GM12878 (cell line): ENCODE measurements at regions of chr2 and their contacts with region 1.

Region 1: DNA sequence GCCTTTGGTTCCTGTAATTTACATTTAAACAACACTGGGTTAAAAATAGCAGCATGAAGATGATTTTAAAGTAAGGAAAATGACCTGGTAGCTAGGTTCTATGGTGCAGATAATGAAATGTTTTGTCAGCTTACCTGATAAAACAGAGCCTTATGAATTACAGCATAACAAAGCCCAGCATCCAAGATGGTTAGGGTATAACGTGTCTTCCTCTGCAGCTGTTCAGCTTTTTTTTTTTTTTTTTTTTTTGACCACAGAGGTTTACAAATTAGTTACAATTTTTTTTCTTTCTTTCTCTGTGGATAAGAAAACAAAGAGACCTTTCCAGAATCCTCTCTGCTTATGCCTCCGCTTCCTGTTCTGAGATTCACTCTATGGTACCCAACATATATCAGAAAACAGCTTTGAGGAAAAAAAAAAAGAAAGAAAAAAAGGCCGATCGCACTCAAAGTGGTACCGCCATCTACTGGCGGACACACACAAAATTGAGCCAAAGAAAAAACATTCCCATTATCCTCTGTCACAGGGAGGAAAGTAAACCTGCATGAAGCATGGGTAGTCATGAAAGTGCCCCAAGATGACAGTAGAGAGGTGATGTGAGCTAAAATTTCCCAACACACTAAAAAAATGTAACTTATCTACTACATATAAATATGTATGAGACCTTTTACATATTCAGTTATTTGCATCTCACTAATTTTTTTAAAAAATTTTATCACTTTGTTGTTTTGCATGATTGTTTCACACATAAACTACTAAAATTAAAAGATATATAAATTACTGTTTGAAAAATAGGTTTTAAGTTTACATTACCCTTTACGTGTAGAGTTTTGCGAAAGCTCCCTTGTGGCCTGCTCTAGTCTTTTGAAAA is at the start of gene SCN3A:
- DNase-seq: no peak
- ATAC-seq: peak; percentile 43
- H3K4me3 ChIP-seq: no peak within 1 kb of the TSS
- H3K27ac ChIP-seq: no peak within 1 kb of the TSS
- H3K4me1 ChIP-seq: no peaks in the 10 kb centered on the region
- H3K27me3 ChIP-seq: no peaks in the 10 kb centered on the region; a peak in 1 of 4 replicates
- CTCF ChIP-seq: peak; percentile 56 to 66 (median 65); a peak in 5 of 6 replicates
- EP300 ChIP-seq: no peak
- POLR2A ChIP-seq: no peak
- RAD21 ChIP-seq: peak; percentile 83
- polyA plus RNA-seq, gene SCN3A: 0.09 TPM in 1 of 2 experiments, not detected in the other

Region 2: DNA sequence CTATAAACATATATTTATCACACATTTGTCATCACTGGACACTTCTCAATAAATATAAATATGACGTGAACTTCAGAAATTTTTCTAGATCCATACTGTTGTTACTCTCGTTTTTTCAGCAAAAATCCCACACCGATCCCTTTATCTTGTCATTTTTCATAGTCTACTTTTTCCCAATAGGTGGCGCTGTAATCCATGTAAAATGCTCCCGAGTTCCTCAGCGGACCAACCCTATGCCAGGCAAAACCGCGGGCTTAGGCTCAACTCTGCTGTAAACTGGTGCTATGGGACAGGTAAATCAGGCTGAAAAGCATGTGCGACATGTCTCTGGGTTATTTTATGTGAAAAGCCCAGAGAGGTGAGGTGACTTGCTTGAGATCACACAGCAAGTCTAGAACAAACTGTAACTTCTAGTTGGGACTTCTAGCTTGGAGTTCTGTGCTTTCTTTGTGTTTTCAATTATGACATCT is 466.3 kb before region 1 on chr2:
- CTCF ChIA-PET with region 1: interaction called, 6 read pairs
- POLR2A ChIA-PET with region 1: no interaction called
- RAD21 ChIA-PET with region 1: no interaction called
- SMC1A ChIA-PET with region 1: no interaction called
- in situ Hi-C with region 1: no loop called
- intact Hi-C with region 1: loop called (anchors 10 kb)
- DNase-seq: no peak
- ATAC-seq: peak; percentile 86
- H3K4me3 ChIP-seq: no peak overlapping the region
- H3K27ac ChIP-seq: no peak overlapping the region
- H3K4me1 ChIP-seq: no peaks in the 10 kb centered on the region
- H3K27me3 ChIP-seq: no peaks in the 10 kb centered on the region; a peak in 1 of 4 replicates
- CTCF ChIP-seq: peak; percentile 57 to 73 (median 60)
- EP300 ChIP-seq: no peak
- POLR2A ChIP-seq: no peak
- RAD21 ChIP-seq: peak; percentile 61

Region 3: GRCh38 chr2:165015052-165015642 is 188.8 kb before region 1 on chr2:
- CTCF ChIA-PET with region 1: interaction called, 136 read pairs
- POLR2A ChIA-PET with region 1: no interaction called
- RAD21 ChIA-PET with region 1: interaction called, 32 read pairs
- SMC1A ChIA-PET with region 1: interaction called, 36 read pairs
- in situ Hi-C with region 1: no loop called
- intact Hi-C with region 1: loop called (anchors 1 kb)
- DNase-seq: no peak
- ATAC-seq: peak; percentile 95
- H3K4me3 ChIP-seq: no peak overlapping the region
- H3K27ac ChIP-seq: no peak overlapping the region
- H3K4me1 ChIP-seq: no peaks in the 10 kb centered on the region
- H3K27me3 ChIP-seq: no peaks in the 10 kb centered on the region
- CTCF ChIP-seq: peak; percentile 77 to 85 (median 80)
- EP300 ChIP-seq: no peak
- POLR2A ChIP-seq: no peak
- RAD21 ChIP-seq: peak; percentile 65

Region 4: DNA sequence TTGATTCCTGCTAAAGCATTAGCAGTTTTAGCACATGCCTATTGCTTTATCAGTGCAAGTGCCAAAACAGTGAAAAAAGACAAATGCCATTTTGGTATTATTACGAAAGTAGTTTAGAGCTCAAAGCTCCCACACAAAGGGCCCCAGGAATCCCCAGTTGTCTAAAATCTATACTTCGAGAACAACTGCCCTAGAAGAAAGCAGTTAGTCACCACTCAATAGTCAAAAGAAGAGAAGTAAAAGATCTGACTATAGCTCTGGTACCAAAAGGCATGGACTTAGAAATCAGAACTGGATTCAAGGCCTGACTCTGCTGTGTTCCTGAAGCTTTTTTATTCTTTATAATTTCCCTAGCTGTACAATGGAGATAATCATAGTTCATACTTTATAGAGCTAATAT is 21.9 kb before region 1 on chr2:
- CTCF ChIA-PET with region 1: interaction called, 15 read pairs
- POLR2A ChIA-PET with region 1: no interaction called
- RAD21 ChIA-PET with region 1: no interaction called
- SMC1A ChIA-PET with region 1: interaction called, 6 read pairs
- in situ Hi-C with region 1: no loop called
- intact Hi-C with region 1: no loop called
- DNase-seq: no peak
- ATAC-seq: no peak
- H3K4me3 ChIP-seq: no peak overlapping the region
- H3K27ac ChIP-seq: no peak overlapping the region
- H3K4me1 ChIP-seq: no peaks in the 10 kb centered on the region
- H3K27me3 ChIP-seq: no peaks in the 10 kb centered on the region
- CTCF ChIP-seq: no peak
- EP300 ChIP-seq: no peak
- POLR2A ChIP-seq: no peak
- RAD21 ChIP-seq: no peak

Region 5: DNA sequence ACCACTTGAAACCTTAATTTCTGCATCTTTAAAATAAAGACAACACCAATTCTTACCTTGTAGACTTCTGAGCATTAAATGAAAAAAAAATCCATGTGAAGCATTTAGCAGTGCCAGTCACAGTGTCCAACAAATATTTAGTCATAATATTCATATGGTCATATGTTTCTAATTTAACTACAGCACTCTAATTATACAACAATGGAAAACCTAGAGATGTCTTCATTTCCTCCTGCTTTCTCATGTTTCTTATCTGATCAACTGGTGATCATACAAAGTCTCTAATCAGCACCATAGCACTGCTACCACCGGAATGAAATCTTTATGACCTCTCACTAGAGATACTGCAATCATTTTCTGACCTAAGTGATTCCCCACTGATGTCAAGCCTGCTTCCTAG is 10.2 kb after region 1 on chr2:
- CTCF ChIA-PET with region 1: interaction called, 25 read pairs
- POLR2A ChIA-PET with region 1: no interaction called
- RAD21 ChIA-PET with region 1: interaction called, 3 read pairs
- SMC1A ChIA-PET with region 1: interaction called, 4 read pairs
- in situ Hi-C with region 1: no loop called
- intact Hi-C with region 1: no loop called
- DNase-seq: no peak
- ATAC-seq: no peak
- H3K4me3 ChIP-seq: no peak overlapping the region
- H3K27ac ChIP-seq: no peak overlapping the region
- H3K4me1 ChIP-seq: no peaks in the 10 kb centered on the region
- H3K27me3 ChIP-seq: no peaks in the 10 kb centered on the region
- CTCF ChIP-seq: no peak
- EP300 ChIP-seq: no peak
- POLR2A ChIP-seq: no peak
- RAD21 ChIP-seq: no peak